Activated CD4-positive, alpha-beta memory T cell treated with anti-CD3 and anti-CD28 coated beads, Interleukin-2, amount 10 ng/mL, durations not matched to agents 7 days and 5 days (primary cell): ENCODE measurements at regions of chr7 and their contacts with region 1.

Region 1: DNA sequence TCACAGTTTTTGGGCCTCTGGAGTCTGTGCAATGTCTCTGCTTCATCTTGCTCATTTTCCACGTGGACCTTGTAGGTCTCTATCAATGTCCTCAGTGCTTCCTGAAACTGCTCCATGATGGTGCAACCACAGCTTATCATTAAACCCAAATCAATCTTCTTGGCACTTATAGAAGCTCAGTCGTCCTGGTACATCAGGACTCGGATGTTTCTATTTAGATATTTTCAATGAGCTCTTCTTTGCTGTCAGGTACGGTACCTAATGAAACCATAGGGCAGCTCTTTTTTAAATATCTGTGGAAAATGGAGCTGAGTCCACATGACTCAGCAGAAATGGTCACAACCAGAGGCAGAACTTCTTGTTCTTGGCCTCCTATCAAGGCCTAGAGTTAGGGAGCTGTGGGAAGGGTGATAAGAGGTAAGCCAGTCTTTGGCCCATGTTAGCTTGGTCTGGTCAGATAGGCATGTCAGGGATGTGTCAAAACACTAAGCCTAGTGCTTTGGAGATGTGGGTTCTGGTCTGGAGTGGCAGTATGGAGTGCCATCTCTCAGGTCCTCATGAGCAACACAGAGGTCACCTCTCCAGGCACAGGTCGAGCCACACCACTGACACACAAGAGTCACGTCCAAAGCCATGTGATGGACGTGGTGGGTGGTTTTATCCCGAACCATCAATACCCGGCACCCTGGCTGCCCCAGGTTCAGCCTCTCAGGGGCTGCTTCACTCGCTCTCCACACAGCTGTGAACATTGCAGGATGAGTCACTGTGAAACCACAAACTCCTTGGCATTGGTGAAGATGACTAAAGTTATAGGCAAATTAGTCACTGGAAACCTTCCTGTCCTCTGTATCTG is 87.0 kb downstream of the TBXAS1 start:
- DNase-seq: peak; percentile 75
- H3K4me3 Mint-ChIP-seq: no peak overlapping the region
- H3K27ac Mint-ChIP-seq: peak overlapping the region; percentile 21
- H3K4me1 Mint-ChIP-seq: peaks cover 23% of the 10 kb centered on the region
- H3K27me3 Mint-ChIP-seq: no peaks in the 10 kb centered on the region

Region 2: GRCh38 chr7:139936760-139937310 is 20.7 kb after region 1 on chr7:
- CTCF ChIA-PET with region 1: no interaction called
- POLR2A ChIA-PET with region 1: interaction called, 10 read pairs
- DNase-seq: no peak
- H3K4me3 Mint-ChIP-seq: no peak overlapping the region
- H3K27ac Mint-ChIP-seq: no peak overlapping the region
- H3K4me1 Mint-ChIP-seq: peaks cover 23% of the 10 kb centered on the region
- H3K27me3 Mint-ChIP-seq: no peaks in the 10 kb centered on the region